PC-9 (cell line): ENCODE measurements at regions of chr1 and their contacts with region 1.

Region 1: GRCh38 chr1:28518000-28518744 is 12.3 kb downstream of the RCC1 start:
- DNase-seq: peak; percentile 66 to 93
- H3K4me3 ChIP-seq: peak overlapping the region; percentile 93
- H3K27ac ChIP-seq: peak overlapping the region; percentile 78
- H3K4me1 ChIP-seq: peaks cover 19% of the 10 kb centered on the region
- H3K27me3 ChIP-seq: no peaks in the 10 kb centered on the region
- CTCF ChIP-seq: peak; percentile 94

Region 2: DNA sequence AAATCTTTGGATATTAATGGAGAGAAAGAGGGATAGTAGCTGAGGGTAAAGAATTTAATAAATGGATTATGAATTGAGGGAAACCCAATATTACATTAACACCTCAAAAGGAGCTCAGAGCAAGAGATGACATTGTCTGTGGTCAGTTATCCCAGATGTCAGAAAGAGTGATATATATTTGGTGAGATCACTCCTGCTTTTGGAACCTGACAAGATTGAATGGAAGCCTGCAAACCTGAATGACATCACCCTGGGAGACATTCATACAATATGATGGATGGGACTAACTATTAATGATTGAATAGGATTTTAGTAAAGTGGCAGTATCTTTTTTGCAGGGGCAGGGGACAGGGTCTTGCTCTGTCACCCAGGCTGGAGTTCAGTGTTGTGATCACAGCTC is 839.4 kb before region 1 on chr1:
- CTCF ChIA-PET with region 1: interaction called, 10 read pairs
- POLR2A ChIA-PET with region 1: no interaction called
- intact Hi-C with region 1: no loop called
- DNase-seq: no peak
- H3K4me3 ChIP-seq: no peak overlapping the region
- H3K27ac ChIP-seq: no peak overlapping the region
- H3K4me1 ChIP-seq: 0 out of 2 replicates have a peak, but pooled peaks cover under 1% of the 10 kb centered on the region
- H3K27me3 ChIP-seq: no peaks in the 10 kb centered on the region
- CTCF ChIP-seq: no peak

Region 3: GRCh38 chr1:28369371-28370238 is 148.6 kb before region 1 on chr1 and contains the start of gene PHACTR4:
- CTCF ChIA-PET with region 1: no interaction called
- POLR2A ChIA-PET with region 1: interaction called, 19 read pairs
- intact Hi-C with region 1: no loop called
- DNase-seq: peak; percentile 77 to 93
- H3K4me3 ChIP-seq: peak within 1 kb of the TSS; percentile 67
- H3K27ac ChIP-seq: peak within 1 kb of the TSS; percentile 52
- H3K4me1 ChIP-seq: peaks cover 23% of the 10 kb centered on the region
- H3K27me3 ChIP-seq: no peaks in the 10 kb centered on the region
- CTCF ChIP-seq: no peak
- total RNA-seq, gene PHACTR4: 33.2 and 45.1 TPM in 2 replicates

Region 4: DNA sequence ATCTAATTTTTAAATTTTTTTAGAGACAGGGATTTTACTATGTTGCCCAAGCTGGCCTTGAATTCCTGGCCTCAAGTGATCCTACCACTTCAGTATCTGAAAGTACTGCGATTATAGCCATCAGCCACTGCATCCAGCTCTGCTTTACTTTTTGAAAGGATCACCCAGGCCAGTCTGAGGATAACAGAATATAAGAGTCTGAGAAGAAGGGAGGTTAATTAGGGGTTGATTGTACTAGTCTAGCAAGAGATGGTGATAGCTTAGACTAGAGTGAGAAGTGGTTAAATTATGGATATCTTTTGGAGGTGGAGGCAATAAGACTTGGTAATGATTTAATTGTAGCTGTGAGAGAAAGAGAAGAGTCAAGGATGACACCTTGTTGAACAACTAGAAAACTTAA is 116.4 kb before region 1 on chr1:
- CTCF ChIA-PET with region 1: no interaction called
- POLR2A ChIA-PET with region 1: no interaction called
- intact Hi-C with region 1: no loop called
- DNase-seq: no peak
- H3K4me3 ChIP-seq: no peak overlapping the region
- H3K27ac ChIP-seq: no peak overlapping the region
- H3K4me1 ChIP-seq: no peaks in the 10 kb centered on the region
- H3K27me3 ChIP-seq: no peaks in the 10 kb centered on the region
- CTCF ChIP-seq: no peak

Region 5: DNA sequence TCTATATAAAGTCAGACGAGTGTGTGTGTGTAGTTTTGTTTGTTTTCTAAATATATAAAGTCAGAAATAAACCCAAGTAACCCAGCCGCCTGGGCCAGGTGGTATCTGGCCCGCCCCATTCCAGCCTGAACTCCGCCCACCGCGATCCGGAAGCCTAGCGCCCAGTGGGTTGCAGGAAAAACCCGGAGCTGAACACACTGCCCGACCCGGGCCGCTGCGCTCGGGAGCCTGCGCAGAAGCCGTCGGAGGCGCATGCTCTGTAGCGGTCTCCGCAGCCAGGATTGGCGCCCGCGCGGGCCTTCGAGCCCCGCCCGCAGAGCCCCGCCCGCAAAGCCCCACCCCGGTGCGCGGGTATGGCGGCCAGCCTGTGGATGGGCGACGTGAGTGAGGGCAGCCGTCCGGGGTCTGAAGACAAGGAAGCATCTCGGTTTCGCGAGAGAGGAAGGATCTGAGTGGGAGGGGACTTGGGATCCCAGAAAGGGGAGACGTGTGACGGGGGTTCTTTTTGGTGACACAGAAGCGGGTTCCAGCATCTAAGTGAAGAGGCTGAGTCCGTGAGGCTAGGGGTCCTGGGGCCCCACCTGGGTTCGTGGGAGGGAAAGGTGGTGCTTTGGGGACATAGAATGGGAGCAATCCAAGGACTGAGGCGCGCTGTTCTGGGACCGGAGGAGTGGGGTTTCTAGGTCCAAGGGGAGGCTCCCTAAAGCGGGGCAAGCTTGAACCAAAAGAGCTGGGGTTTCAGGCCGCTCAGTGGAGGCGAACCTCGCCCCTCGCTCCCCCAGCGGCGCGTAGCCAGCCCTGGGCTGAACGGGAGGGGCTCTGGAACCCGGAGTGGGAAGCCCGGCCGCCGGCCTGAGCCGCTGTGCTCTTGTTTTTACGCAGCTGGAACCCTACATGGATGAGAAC is 34.8 kb after region 1 on chr1 and contains the start of gene TRNAU1AP:
- CTCF ChIA-PET with region 1: interaction called, 5 read pairs
- POLR2A ChIA-PET with region 1: no interaction called
- intact Hi-C with region 1: loop called (anchors 2 kb)
- DNase-seq: peak; percentile 82 to 97
- H3K4me3 ChIP-seq: peak within 1 kb of the TSS; percentile 63
- H3K27ac ChIP-seq: peak within 1 kb of the TSS; percentile 62
- H3K4me1 ChIP-seq: peaks cover 6% of the 10 kb centered on the region
- H3K27me3 ChIP-seq: no peaks in the 10 kb centered on the region
- CTCF ChIP-seq: no peak
- total RNA-seq, gene TRNAU1AP: 31.7 and 43.0 TPM in 2 replicates

Region 6: DNA sequence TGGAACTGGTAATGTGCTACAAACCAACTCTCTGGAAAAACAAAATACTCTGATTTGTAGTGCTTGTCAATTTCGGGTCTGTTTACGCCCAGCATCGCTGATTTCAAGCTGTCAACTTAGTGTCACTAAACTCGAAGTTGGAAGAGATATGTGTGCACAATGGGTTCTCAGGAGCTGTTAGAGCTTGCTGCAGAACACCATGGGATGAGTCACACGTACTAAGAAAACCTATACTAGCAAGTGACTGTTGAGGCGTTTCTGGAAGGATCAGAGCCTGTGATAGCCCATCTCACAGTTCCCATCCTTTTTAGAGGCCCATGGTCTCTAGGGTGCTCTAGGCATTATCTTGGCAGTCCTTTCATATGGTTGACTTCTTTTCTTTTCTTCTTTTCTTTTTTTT is 164.7 kb after region 1 on chr1:
- CTCF ChIA-PET with region 1: no interaction called
- POLR2A ChIA-PET with region 1: no interaction called
- intact Hi-C with region 1: no loop called
- DNase-seq: no peak
- H3K4me3 ChIP-seq: no peak overlapping the region
- H3K27ac ChIP-seq: no peak overlapping the region
- H3K4me1 ChIP-seq: no peaks in the 10 kb centered on the region
- H3K27me3 ChIP-seq: no peaks in the 10 kb centered on the region
- CTCF ChIP-seq: no peak

Region 7: DNA sequence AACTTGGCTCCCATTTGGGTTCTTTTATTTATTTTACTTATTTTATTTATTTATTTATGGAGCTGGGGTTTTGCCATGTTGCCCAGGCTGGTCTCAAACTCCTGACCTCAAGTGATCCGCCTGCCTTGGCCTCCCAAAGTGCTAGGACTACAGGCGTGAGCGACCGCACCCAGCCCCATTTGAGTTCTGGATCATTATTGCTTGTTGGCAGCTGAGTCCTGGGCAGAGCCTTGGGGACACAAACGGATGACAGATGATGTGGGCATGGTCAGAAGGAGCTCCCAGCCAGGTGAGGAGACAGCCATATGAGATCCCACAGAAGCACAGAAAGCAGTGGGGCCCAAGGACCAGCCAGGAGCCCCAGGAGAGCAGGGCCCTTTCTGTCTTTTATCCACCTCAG is 1951.3 kb after region 1 on chr1:
- CTCF ChIA-PET with region 1: no interaction called
- POLR2A ChIA-PET with region 1: interaction called, 10 read pairs
- intact Hi-C with region 1: no loop called
- DNase-seq: no peak
- H3K4me3 ChIP-seq: no peak overlapping the region
- H3K27ac ChIP-seq: no peak overlapping the region
- H3K4me1 ChIP-seq: no peaks in the 10 kb centered on the region
- H3K27me3 ChIP-seq: no peaks in the 10 kb centered on the region
- CTCF ChIP-seq: no peak